ENCODE measurements at regions of chr5 and their contacts with region 1.

Region 1: GRCh38 chr5:133698646-133699526 is 86.5 kb upstream of the FSTL4 start:
- DNase-seq: no peak
- H3K4me3 Mint-ChIP-seq: no peak overlapping the region
- H3K27ac Mint-ChIP-seq: peak overlapping the region; percentile 77
- H3K4me1 Mint-ChIP-seq: peaks cover 20% of the 10 kb centered on the region
- H3K27me3 Mint-ChIP-seq: peaks cover 4% of the 10 kb centered on the region

Region 2: GRCh38 chr5:133688391-133688790 is 10.5 kb before region 1 on chr5:
- CTCF ChIA-PET with region 1: no interaction called
- POLR2A ChIA-PET with region 1: interaction called, 5 read pairs
- intact Hi-C with region 1: loop called (anchors 1 kb)
- DNase-seq: no peak
- H3K4me3 Mint-ChIP-seq: no peak overlapping the region
- H3K27ac Mint-ChIP-seq: peak overlapping the region; percentile 54
- H3K4me1 Mint-ChIP-seq: peaks cover 7% of the 10 kb centered on the region
- H3K27me3 Mint-ChIP-seq: peaks cover 33% of the 10 kb centered on the region

Region 3: GRCh38 chr5:133746834-133747233 is 47.9 kb after region 1 on chr5:
- CTCF ChIA-PET with region 1: no interaction called
- POLR2A ChIA-PET with region 1: no interaction called
- intact Hi-C with region 1: loop called (anchors 5 kb)
- DNase-seq: peak; percentile 43
- H3K4me3 Mint-ChIP-seq: no peak overlapping the region
- H3K27ac Mint-ChIP-seq: no peak overlapping the region
- H3K4me1 Mint-ChIP-seq: no peaks in the 10 kb centered on the region
- H3K27me3 Mint-ChIP-seq: peaks cover 7% of the 10 kb centered on the region

Measured in activated CD4-positive, alpha-beta memory T cell treated with anti-CD3 and anti-CD28 coated beads for 36 hours (primary cell).